Keratinocyte (primary cell): ENCODE measurements at regions of chr5 and their contacts with region 1.

Region 1: DNA sequence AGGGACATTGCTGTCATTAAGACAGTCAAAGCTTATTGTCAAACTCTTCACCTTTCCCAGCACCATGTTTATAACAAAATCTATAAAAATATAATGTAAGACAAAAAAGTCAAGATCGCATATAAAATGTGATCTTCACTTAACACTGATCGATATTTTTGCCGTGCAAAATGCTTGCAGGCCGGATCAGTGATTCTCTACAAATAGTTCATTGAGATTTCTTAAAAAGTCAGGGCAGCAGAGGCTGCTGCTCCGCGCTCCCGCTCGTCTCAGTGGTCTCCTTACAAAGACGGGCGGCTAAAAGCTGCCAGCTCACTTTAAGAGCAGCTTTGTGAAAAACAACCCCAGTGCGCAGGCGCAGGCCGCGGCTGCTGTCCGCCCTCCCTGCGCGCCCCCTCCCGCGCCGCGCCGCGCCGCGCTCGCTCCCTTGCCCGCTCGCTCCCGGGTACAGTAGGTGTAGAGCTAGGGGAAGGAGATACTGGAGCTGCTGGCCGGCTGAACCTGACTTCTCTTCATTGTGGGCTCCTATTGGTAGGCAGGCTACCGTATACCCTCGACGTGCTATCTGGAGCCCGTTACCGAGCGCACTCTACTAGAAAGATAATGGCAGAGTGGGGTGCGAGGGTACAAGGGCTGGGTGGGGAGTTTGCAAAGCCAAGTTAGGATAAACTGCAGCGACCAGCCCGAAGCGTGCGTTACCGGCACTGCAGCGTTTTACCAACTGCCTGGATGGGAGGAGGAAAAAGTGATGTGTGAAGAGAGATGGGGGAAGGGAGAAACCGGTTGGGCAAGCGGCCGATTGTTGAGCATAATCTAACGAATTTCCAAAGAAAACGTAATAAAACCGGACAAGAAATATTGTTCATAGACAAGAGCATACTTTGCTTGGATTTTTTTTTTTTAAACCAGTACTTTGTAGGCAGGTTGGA is at the start of gene ARRDC3:
- DNase-seq: no peak
- H3K4me3 ChIP-seq: peak within 1 kb of the TSS; percentile 75 to 99 (median 98)
- H3K27ac ChIP-seq: peak within 1 kb of the TSS; percentile 100
- H3K4me1 ChIP-seq: peaks cover 8% of the 10 kb centered on the region
- H3K27me3 ChIP-seq: no peaks in the 10 kb centered on the region
- CTCF ChIP-seq: no peak
- polyA plus RNA-seq, gene ARRDC3: 3.2 to 8.9 TPM (median 7.1 TPM) in 3 replicates

Region 2: DNA sequence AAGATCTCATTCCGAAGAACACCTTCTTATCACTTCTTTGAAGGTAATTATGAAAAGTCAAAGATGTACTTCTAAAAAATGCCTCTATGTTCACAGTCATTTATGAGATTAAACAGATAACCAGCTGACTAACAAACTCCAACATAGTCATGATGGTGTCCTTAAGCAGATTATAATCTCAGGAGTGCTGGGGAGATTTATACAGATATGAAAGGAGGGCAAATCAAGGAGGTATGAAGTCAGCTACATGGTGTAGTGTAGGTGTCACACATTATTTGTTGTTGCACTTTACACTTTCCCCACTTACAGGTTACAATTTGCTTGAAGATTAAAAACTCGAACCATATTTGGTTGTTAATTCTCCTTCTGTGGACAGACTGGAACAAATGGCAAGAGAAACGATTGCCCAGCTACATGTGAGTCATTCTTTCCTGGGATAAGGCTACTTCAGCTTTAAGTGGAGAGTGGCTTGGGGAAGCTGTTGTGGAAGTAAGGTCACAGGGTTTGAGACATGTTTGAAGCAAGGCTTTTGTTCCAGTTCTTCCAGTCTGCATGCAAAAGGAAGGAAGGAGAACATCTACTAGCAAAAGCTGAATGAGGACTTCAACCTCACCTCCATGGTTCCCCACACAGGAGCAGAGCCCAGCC is 504.6 kb before region 1 on chr5:
- dilution Hi-C with region 1: loop called (anchors 25 kb)
- DNase-seq: no peak
- H3K4me3 ChIP-seq: no peak overlapping the region
- H3K27ac ChIP-seq: no peak overlapping the region
- H3K4me1 ChIP-seq: no peaks in the 10 kb centered on the region
- H3K27me3 ChIP-seq: no peaks in the 10 kb centered on the region
- CTCF ChIP-seq: no peak